H1 (cell line): ENCODE measurements at regions of chr18 and their contacts with region 1.

Region 1: DNA sequence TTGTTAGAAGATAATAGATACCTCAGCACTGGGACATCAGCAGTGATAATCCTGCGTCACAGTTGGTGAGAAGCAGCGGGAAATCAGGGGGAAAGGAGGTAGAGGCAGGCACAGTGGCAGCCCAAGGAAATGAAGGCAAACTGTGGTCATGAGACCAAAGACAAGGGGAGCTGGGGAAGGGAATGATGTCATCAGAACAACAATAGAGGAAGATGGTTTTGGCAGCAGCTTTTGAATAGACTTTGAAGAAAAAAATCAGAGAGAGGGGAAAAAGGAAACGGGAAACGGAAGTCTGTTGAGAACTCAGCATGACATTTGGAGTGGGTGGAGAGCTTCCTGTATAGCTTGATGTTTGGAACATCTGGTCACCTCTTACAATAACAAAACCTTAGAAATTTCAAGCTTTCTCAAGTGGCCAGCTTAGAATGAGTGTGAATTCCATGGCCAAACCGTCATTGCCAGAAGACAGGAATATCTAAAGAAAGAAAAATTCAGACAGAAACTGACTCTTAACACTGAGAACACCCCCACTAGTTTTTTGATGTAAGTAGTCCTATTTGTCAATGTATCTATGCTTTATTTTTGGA is 18.4 kb upstream of the YES1 start:
- DNase-seq: no peak
- H3K4me3 ChIP-seq: peak overlapping the region in 1 of 4 experiments; percentile 4; a peak in 1 of 8 replicates
- H3K27ac ChIP-seq: no peak overlapping the region
- H3K4me1 ChIP-seq: peaks cover 0 to 6% (median 2%) of the 10 kb centered on the region in 4 experiments; a peak in 3 of 7 replicates
- H3K27me3 ChIP-seq: no peaks in the 10 kb centered on the region
- CTCF ChIP-seq: no peak
- EP300 ChIP-seq: no peak
- POLR2A ChIP-seq: no peak
- RAD21 ChIP-seq: no peak

Region 2: DNA sequence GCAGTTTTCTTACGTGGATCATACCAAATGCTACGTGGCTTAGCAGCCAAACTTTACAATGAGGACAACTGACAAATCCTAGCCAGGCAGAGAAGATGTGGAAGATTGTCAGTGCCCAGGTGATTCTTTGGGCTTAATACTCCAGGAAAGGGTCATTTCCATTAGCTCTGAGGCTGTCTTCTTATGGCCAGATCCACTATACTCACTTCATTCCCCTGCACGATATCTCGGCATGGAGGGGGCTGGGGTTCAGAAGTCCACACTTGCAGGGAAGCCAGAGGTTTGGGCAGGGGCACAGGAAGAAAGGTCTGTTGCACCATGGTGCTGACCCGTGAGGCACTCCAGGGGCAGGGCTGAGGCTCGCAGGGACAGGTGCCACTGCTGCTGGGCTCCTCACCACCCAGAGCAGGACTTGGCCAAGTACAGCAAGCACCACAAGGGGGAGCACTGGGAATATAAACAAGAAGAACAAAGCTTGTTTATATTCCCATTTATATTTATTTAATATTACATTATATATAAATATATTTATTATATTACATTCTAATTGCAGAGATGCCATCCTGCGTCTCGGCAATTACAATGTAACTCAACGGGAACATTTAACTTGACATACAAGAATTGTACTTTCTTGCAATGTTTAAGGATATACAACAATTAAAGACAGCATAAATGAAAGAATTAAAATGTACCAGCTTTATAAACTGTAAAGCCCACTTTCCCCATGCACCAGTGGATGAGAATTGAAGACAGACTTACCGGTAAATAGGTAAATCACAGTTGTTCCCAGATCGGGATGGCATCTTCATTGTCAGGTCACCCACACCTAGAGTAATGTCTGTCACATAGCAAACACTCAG is 206.4 kb before region 1 on chr18:
- CTCF ChIA-PET with region 1: interaction called, 63 read pairs
- POLR2A ChIA-PET with region 1: no interaction called
- DNase-seq: peak; percentile 36 to 79
- H3K4me3 ChIP-seq: no peak overlapping the region
- H3K27ac ChIP-seq: no peak overlapping the region
- H3K4me1 ChIP-seq: no peaks in the 10 kb centered on the region
- H3K27me3 ChIP-seq: no peaks in the 10 kb centered on the region
- CTCF ChIP-seq: peak; percentile 70 to 77 (median 76)
- EP300 ChIP-seq: no peak
- POLR2A ChIP-seq: no peak
- RAD21 ChIP-seq: peak; percentile 68 to 76

Region 3: GRCh38 chr18:686339-687111 is 143.9 kb before region 1 on chr18:
- CTCF ChIA-PET with region 1: interaction called, 31 read pairs
- POLR2A ChIA-PET with region 1: no interaction called
- DNase-seq: peak; percentile 29 to 66
- H3K4me3 ChIP-seq: peak overlapping the region in 3 of 4 experiments; percentile 11 to 33 (median 21); a peak in 3 of 8 replicates
- H3K27ac ChIP-seq: no peak overlapping the region
- H3K4me1 ChIP-seq: peaks cover 7 to 19% (median 11%) of the 10 kb centered on the region in 4 experiments
- H3K27me3 ChIP-seq: peaks cover 0 to 4% (median 0%) of the 10 kb centered on the region in 4 experiments; a peak in 3 of 7 replicates
- CTCF ChIP-seq: peak; percentile 9 to 21 (median 14); a peak in 3 of 4 replicates
- EP300 ChIP-seq: no peak
- POLR2A ChIP-seq: no peak
- RAD21 ChIP-seq: peak in 1 of 2 experiments; percentile 34; a peak in 2 of 4 replicates

Region 4: DNA sequence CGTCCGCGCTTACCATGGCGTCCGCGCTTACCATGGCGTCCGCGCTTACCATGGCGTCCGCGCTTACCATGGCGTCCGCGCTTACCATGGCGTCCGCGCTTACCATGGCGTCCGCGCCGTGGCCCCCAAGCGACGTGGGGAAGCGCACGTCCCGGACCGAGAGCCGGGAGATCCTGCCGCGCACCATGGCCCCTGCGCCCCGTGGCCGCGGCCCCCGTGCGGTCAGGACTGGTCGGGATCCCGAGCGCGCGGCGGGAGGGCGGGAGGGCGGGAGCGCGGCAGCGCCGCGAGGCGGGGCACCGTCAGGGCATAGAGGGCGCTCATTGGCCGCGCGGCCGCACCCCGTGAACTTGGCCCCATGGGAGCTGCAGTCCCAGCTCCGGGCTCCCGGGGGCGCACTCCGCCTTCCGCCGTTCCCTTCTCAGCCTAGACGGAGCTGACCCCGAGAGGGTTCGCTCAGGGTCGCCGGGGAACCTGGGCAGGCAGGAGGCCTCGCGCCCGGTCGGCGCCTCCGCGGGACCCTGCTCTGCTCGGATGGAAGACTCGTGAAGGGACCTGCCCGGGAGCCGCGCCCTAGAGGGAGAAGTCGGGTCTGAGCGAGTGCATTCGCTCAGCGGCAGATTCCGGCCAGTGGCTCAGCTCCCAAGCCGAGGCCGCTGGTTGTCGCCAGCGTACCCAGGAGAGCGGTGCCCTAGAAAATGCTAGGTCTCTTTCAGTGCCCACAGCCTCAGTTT is 117.8 kb before region 1 on chr18 and contains the start of gene ENOSF1:
- CTCF ChIA-PET with region 1: interaction called, 16 read pairs
- POLR2A ChIA-PET with region 1: interaction called, 3 read pairs
- DNase-seq: peak; percentile 79 to 99
- H3K4me3 ChIP-seq: peak within 1 kb of the TSS; percentile 64 to 86 (median 76)
- H3K27ac ChIP-seq: peak within 1 kb of the TSS; percentile 50; the same call in 1 of the 2 replicates
- H3K4me1 ChIP-seq: peaks cover 0 to 3% (median 1%) of the 10 kb centered on the region in 4 experiments; a peak in 2 of 7 replicates
- H3K27me3 ChIP-seq: no peaks in the 10 kb centered on the region
- CTCF ChIP-seq: peak; percentile 76 to 85 (median 84)
- EP300 ChIP-seq: no peak; a peak in 1 of 3 replicates
- POLR2A ChIP-seq: peak in 1 of 2 experiments; percentile 62; a peak in 1 of 3 replicates
- RAD21 ChIP-seq: peak; percentile 64 to 78
- total RNA-seq, gene ENOSF1: 25.6 and 26.4 TPM in 2 replicates

Region 5: DNA sequence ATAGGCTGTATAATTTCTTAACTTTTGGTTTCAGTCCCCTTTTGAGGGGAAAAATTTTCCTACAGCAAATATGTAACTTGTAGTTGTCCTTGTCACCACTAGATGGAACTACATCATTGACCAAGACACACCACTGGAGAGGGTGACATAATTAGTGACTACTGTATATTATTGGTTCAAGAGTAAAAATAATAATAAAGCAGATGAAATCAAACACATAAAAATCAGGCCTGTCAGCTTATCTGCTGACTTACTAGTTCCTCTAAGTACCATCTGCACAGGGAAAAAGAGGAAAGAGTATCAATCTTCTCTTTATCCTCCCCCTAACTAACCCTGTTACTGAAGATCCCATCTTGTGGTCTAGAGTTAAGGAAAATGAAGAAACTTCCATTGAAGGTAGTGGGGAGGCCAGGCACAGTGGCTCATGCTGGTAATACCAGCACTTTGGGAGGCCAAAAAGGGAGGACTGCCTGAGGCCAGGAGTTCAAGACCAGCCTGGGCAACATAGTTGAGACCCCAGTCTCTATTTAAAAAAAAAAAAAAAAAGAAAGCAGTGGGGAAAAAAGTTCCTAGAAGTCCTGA is 88.4 kb before region 1 on chr18:
- CTCF ChIA-PET with region 1: interaction called, 110 read pairs
- POLR2A ChIA-PET with region 1: interaction called, 3 read pairs
- DNase-seq: no peak
- H3K4me3 ChIP-seq: no peak overlapping the region
- H3K27ac ChIP-seq: no peak overlapping the region
- H3K4me1 ChIP-seq: no peaks in the 10 kb centered on the region
- H3K27me3 ChIP-seq: no peaks in the 10 kb centered on the region
- CTCF ChIP-seq: peak in 2 of 3 experiments; percentile 41 to 54; a peak in 2 of 4 replicates
- EP300 ChIP-seq: no peak
- POLR2A ChIP-seq: no peak
- RAD21 ChIP-seq: peak; percentile 77 to 78

Region 6: DNA sequence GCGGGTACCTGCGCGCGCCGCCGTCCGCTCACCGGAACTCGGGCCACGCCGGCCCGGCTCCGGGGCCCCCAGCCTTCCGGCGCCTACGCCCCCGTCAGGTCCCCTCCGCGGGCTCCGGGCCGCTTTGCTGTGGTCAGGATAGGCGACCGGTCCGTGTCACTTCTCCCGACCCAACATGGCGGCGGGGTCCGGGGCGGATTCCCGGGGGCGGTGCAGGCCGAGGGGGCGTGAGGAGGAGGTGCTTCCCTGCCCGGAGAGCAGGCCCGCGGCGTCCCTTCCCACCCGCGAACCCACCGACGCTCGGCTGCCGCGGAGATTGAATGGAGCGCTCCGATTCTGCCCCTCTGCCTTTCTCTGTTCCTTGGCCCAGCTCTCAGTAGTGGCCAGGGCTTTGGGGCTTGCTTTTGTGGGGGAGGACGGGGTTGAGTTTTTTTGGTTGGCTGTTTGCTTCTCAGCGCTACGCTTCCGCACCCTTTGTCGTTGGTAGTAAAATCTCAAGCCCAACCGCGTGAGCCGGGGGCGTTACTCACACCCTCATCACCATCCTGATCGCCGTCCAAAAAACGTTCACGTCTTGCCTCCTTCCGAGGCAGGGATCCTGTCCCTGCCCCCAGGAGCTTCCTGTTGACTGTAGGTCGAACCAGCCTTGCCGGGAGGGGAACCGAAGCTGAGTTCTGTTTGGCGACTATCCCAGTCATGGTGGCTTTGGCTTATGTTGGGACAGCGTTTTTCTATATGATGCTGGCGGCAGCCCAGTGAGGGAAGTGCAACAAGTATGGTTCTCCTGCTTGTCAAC is 17.8 kb before region 1 on chr18:
- CTCF ChIA-PET with region 1: interaction called, 106 read pairs
- POLR2A ChIA-PET with region 1: interaction called, 4 read pairs
- DNase-seq: peak in 1 of 2 experiments; percentile 90
- H3K4me3 ChIP-seq: peak overlapping the region; percentile 92 to 93 (median 92)
- H3K27ac ChIP-seq: peak overlapping the region; percentile 94
- H3K4me1 ChIP-seq: peaks cover 0 to 4% (median 2%) of the 10 kb centered on the region in 4 experiments; a peak in 2 of 7 replicates
- H3K27me3 ChIP-seq: no peaks in the 10 kb centered on the region
- CTCF ChIP-seq: no peak
- EP300 ChIP-seq: no peak
- POLR2A ChIP-seq: peak in 1 of 2 experiments; percentile 75; a peak in 2 of 3 replicates
- RAD21 ChIP-seq: no peak